Head of caudate nucleus (tissue), 42 donors: ENCODE measurements at regions of chr12 and their contacts with region 1.

Region 1: GRCh38 chr12:54279866-54280467 is at the start of gene CBX5:
- DNase-seq: peak; percentile 89 to 99 (median 96)

Region 2: DNA sequence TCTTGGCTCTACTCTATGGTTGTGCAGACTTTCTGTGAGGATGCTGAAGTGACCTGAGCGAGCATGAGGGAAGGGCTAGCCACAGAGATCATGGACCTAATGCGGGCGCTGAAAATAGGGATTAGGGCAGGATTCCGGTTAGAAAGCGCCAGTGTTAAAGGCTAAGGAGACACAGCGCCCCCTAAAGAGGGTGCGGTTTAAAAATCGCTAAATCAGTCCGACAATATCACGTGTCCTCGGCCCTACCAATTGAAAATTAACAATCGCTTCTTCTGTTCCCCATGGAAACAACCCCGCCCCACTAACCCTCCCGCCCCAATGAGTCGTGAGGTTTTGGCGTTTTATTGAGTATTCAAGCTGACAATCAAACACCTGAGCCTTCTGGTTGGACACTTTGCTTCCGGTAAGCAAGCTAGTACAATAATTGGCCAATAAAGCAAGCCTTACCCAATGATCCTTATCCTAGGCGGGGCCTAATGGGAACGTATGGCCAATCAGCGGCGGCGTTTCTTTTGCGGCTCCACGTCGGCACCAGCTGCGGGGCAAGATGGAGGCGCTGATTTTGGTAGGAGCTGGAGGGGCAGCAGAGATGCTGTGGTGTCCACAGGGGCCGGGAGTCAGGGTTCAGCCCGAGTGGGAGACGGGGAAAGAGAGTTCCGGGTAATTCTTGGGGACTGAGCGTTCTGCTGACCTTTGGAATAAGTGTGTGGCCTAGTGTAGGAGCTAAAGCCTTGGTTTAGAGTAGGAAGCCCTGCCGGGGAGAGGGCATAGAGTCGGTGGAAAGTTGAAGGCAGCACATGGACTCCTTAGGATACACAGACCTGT is 44.9 kb after region 1 on chr12 and contains the start of gene COPZ1:
- intact Hi-C with region 1: loop called (anchors 5 kb)
- DNase-seq: peak; percentile 91 to 99 (median 96)

Region 3: GRCh38 chr12:54431911-54432814 is 152.2 kb after region 1 on chr12:
- intact Hi-C with region 1: no loop called
- DNase-seq: peak in 26 of 42 donors; percentile 22 to 77 (median 46)